Left cardiac atrium (tissue), 4 donors: ENCODE measurements at regions of chr13 and their contacts with region 1.

Region 1: DNA sequence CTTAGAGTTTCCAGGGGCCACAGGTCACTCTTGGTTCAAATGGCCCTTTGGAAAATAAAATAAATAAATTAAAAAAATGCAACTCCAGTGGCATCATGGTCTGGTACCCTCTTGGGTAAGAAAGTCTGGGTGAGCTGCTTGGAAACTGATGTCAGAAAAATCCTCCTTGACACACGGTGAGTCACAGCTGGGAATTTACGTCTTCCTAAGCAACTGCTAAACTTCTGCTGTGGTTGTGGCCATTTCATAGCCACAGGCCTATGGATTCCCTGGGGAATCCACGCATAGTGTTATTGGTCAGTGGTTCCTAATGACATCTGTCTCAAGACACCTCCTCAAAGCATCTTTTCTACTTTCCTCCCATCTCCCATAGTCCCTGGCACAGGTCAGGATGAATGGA is 220.8 kb downstream of the COG6 start:
- DNase-seq: no peak
- ATAC-seq: peak in 1 of 2 donors; percentile 27

Region 2: DNA sequence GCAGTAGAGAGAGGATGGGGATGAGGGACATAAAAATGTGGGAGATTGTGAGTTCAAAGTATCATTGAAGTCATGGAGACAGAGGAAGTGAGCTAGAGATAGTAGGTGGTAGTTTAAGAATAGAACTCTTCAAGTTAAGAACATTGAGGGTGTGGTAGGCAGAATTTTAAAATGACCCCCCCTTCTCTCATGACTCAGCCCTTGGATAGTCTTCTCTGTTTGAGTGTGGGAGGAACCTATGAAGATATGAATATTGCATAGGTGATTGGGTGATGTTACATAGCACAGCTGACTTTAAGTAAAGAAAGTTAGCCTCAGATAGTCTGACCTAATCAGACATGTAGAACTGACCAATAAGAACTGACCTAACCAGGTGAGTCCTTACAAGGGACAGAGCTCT is 371.6 kb after region 1 on chr13:
- intact Hi-C with region 1: loop called in 1 of 2 experiments (anchors 10 kb)
- DNase-seq: no peak
- ATAC-seq: peak in 1 of 2 donors; percentile 83